ENCODE measurements at regions of chrX and their contacts with region 1.

Region 1: DNA sequence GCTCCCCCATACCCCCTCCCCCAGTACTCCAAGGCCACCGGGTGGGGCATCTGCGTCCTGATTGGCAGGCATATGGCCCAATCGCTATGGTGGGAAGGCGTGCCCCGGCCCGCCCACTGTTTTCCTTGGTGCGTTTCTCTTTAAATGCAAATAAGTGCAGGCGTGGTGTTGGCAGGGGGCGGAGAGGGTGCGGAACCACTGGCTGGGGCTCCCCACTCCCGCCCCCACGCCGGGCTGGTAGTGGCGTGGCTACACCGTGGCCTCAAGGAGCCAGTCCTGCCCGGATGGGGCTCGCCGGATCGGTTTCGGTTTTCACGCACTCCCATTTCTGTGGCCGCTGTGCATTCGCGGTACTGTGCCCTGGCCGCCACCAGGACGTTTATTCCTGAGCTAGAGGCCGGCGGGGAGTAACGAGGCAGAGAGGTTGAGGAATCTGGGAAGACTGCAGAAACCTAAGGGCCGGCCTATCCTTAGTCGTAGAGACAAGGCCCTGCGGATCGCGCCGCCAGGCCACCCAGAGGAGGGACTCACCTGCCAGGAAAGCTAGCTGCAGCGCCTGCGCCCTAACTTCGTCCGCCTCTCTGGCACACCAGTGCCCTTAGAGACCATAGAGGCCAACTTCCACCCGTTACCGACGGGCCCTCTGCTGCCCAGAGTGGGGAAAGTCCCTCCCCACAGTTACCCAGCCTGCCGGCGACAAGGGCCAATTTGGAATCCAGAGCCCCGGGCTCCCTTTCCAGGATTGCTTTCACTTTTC is 405 bp upstream of the AMER1 start:
- DNase-seq: peak; percentile 86
- H3K4me3 Mint-ChIP-seq: peak overlapping the region; percentile 85
- H3K27ac Mint-ChIP-seq: peak overlapping the region; percentile 87
- H3K4me1 Mint-ChIP-seq: peaks cover 10% of the 10 kb centered on the region
- H3K27me3 Mint-ChIP-seq: no peaks in the 10 kb centered on the region

Region 2: DNA sequence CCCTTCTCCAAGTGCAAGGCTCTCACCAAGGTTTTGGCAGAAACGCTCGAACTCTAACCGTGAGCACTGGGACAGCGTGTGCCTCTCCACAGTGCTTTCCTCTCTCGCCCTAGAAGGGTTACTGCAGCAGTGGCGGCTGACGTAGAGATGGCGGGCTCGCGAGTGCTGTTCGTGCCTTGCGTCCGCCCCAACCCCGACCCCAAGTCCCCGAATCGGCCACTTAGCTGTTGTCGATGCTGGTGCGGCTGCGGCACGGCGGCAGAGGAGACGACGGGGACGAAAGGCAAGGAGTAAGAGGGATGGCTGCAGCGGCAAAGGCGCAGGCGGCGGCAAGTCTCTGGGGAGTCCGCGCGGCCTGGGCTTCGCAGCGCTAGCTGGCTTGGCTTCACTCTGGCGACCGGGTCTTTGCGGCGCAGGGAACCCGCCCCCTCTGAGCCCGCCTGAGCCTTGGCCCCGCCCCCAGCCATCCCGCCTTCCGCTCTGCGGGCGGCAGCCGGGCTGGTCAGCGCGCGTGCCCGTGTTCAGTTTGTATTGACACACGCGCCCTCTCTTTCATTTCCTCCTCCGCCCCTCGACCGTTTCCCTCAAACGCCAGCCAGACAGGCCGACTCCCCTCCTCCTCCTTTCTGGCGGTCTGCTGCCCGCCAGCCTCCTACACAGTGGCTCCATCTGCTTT is 854.8 kb before region 1 on chrX and contains the start of gene SPIN4:
- intact Hi-C with region 1: loop called (anchors 5 kb)
- DNase-seq: peak; percentile 54
- H3K4me3 Mint-ChIP-seq: peak within 1 kb of the TSS; percentile 93
- H3K27ac Mint-ChIP-seq: peak within 1 kb of the TSS; percentile 81
- H3K4me1 Mint-ChIP-seq: peaks cover 27% of the 10 kb centered on the region
- H3K27me3 Mint-ChIP-seq: peaks cover 2% of the 10 kb centered on the region
- total RNA-seq, gene SPIN4: 4.4 and 4.5 TPM in 2 replicates

Region 3: DNA sequence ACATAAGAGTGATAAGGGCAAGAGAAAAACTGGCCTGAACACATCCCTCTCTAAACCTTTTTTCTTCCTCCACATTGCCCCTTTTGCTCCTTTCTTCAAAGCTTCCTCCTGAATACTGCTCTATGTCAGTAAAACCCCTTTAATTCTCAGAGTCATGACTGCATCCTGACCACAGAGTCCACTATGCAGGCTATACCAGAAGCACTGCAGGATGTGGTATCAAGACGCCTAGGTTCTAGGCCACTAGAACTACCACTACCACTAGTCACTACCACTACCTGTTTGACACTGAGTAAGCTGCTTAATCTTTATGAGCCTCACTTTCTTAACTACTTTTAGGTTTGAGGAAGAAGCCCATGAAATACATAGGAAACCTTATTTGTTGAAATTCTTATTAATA is 459.6 kb before region 1 on chrX:
- intact Hi-C with region 1: loop called (anchors 1 kb)
- DNase-seq: peak; percentile 31
- H3K4me3 Mint-ChIP-seq: peak overlapping the region; percentile 40
- H3K27ac Mint-ChIP-seq: peak overlapping the region; percentile 79
- H3K4me1 Mint-ChIP-seq: peaks cover 66% of the 10 kb centered on the region
- H3K27me3 Mint-ChIP-seq: no peaks in the 10 kb centered on the region

Region 4: GRCh38 chrX:64186974-64187761 is 18.7 kb before region 1 on chrX:
- intact Hi-C with region 1: no loop called
- DNase-seq: no peak
- H3K4me3 Mint-ChIP-seq: no peak overlapping the region
- H3K27ac Mint-ChIP-seq: no peak overlapping the region
- H3K4me1 Mint-ChIP-seq: no peaks in the 10 kb centered on the region
- H3K27me3 Mint-ChIP-seq: no peaks in the 10 kb centered on the region

Region 5: DNA sequence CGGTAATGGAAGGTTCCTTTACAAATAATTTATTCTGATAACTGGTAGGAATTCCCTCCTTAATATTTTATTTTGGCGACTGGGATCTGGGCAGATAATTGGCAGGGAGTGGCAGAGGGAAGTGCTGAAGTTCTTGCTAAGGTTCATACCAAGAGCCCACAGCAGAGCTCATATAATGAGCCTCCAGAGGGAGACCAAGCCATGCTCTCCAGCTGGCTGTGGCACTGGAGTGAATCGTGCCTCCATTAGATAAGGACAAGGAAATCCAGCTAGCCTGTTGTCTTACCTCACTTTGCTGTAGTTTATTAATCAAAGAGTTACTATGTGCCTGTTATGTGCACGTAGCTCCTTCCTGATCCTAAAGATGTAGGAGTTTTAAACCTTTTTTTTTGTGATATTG is 23.2 kb after region 1 on chrX:
- intact Hi-C with region 1: no loop called
- DNase-seq: no peak
- H3K4me3 Mint-ChIP-seq: no peak overlapping the region
- H3K27ac Mint-ChIP-seq: no peak overlapping the region
- H3K4me1 Mint-ChIP-seq: no peaks in the 10 kb centered on the region
- H3K27me3 Mint-ChIP-seq: no peaks in the 10 kb centered on the region

Region 6: GRCh38 chrX:64394874-64395567 is 189.1 kb after region 1 on chrX and contains the start of gene MTMR8:
- intact Hi-C with region 1: loop called (anchors 1 kb)
- DNase-seq: peak; percentile 65
- H3K4me3 Mint-ChIP-seq: peak within 1 kb of the TSS; percentile 87
- H3K27ac Mint-ChIP-seq: peak within 1 kb of the TSS; percentile 54
- H3K4me1 Mint-ChIP-seq: peaks cover 17% of the 10 kb centered on the region
- H3K27me3 Mint-ChIP-seq: no peaks in the 10 kb centered on the region
- total RNA-seq, gene MTMR8: 4.1 and 7.1 TPM in 2 replicates

Region 7: GRCh38 chrX:65034668-65035445 is 828.9 kb after region 1 on chrX:
- intact Hi-C with region 1: loop called (anchors 1 kb)
- DNase-seq: peak; percentile 76
- H3K4me3 Mint-ChIP-seq: peak within 1 kb of the TSS; percentile 91
- H3K27ac Mint-ChIP-seq: peak within 1 kb of the TSS; percentile 92
- H3K4me1 Mint-ChIP-seq: peaks cover 20% of the 10 kb centered on the region
- H3K27me3 Mint-ChIP-seq: no peaks in the 10 kb centered on the region

Measured in activated T-helper 1 cell treated with anti-CD3 and anti-CD28 coated beads, Interleukin-12 subunit alpha, Interleukin-12 subunit beta, Interleukin-2, Interleukin-4 antibody, amounts not matched to agents 30 ng/mL and 10 ng/mL and 1 ng/mL, durations not matched to agents 14 hours and 24 hours and 36 hours (primary cell).